PC-9 (cell line): ENCODE measurements at regions of chr4 and their contacts with region 1.

Region 1: DNA sequence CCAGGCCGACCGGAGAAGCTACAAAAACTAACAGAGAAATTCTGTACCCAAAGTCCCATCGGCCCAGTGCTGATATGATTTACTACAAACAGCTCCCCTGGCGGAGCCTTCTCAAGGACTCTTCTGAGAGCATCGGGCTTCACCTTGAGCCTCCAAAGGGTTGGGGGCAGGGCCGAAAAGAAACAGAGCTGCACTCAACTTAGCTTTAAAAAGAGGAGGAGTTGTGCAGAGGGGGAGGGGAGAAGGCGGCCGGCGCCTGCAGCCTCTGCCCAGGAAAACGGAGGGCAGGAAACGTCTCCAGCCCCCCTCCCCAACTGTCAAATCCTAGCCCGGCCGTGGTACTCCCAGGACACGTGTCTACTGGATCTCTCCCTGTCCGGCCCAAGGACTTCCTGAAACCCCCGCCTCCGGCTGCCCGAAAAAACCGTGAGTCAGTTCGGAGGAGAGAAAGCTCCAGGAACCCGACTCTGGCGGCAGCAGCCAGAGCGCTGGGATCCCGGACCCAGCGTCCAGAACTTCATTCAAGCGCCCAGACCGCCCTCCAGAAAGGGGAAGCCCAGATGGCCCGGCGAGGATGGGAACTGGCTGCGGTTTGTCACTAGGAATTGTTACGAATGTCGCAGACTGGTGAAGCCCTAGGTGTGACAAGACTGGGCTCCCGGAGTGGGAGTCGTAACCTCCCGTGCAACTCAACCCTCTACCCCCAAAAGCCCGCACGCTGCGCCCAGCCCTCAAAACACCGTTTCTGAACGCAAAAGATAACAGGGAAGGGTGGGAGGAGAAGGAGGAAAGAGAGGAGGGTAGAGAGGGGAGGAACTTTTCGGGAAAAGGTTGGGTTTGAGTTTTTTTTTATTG is 973 bp downstream of the ADAMTS3 start:
- DNase-seq: peak; percentile 40 to 52
- H3K4me3 ChIP-seq: peak overlapping the region; percentile 65
- H3K27ac ChIP-seq: no peak overlapping the region
- H3K4me1 ChIP-seq: peaks cover 6% of the 10 kb centered on the region; the same call in 1 of the 2 replicates
- H3K27me3 ChIP-seq: no peaks in the 10 kb centered on the region
- CTCF ChIP-seq: no peak; the same call in 1 of the 2 replicates

Region 2: DNA sequence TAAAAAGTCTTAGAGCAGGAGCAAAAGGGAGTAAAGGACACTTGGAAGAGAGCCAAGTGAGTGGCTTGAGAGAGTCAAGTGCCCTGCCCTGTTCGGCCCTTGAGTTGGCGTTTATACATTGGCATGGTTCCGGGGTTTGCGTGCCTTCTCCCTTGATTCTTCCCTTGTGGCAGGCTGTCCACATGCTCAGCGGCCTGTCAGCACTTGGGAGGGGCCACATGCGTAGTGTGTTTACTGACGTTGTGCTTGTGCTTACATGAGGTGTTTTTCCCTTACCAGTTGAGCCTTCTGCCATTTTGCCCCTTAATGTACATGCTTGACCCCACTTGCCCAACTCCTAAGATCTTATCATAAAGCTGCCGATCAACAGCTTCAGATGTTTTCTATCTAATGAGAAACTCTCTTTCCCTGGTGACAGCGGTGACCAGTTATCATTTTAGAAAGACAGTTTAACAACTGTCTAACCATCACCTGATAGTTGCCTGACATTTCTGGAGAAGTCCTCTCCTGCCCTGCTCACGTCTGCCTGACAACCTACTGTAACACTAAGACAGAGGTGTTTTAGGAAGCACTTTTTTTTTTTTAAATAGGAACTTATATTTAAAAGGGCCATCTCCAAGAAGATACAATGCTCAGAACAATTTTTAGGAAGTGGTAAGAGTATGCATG is 734.7 kb before region 1 on chr4:
- CTCF ChIA-PET with region 1: no interaction called
- POLR2A ChIA-PET with region 1: interaction called, 12 read pairs
- intact Hi-C with region 1: no loop called
- DNase-seq: peak in 1 of 2 experiments; percentile 3
- H3K4me3 ChIP-seq: no peak overlapping the region
- H3K27ac ChIP-seq: no peak overlapping the region
- H3K4me1 ChIP-seq: no peaks in the 10 kb centered on the region
- H3K27me3 ChIP-seq: no peaks in the 10 kb centered on the region
- CTCF ChIP-seq: no peak

Region 3: DNA sequence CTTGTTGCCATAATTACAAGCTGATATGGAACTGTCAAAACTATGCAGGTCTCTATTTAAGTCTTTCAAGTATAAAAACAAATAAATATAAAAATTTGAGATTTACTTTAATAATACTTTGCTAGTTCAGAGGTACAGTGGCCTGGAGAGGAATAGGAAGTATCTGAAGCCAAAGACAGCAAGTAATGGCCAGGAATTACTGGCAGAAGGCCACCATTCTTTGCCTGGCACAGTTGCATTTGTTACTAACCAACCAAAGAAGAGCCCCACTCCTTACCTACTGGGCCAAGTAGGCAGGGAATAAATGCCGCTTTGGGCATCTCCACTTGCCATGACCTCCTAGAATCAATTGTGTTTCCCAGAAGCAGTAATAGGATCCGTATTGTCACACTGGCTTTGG is 14.8 kb after region 1 on chr4:
- CTCF ChIA-PET with region 1: no interaction called
- POLR2A ChIA-PET with region 1: interaction called, 11 read pairs
- intact Hi-C with region 1: no loop called
- DNase-seq: no peak
- H3K4me3 ChIP-seq: no peak overlapping the region
- H3K27ac ChIP-seq: no peak overlapping the region
- H3K4me1 ChIP-seq: no peaks in the 10 kb centered on the region
- H3K27me3 ChIP-seq: no peaks in the 10 kb centered on the region
- CTCF ChIP-seq: no peak